ENCODE measurements at regions of chr6 and their contacts with region 1.

Region 1: DNA sequence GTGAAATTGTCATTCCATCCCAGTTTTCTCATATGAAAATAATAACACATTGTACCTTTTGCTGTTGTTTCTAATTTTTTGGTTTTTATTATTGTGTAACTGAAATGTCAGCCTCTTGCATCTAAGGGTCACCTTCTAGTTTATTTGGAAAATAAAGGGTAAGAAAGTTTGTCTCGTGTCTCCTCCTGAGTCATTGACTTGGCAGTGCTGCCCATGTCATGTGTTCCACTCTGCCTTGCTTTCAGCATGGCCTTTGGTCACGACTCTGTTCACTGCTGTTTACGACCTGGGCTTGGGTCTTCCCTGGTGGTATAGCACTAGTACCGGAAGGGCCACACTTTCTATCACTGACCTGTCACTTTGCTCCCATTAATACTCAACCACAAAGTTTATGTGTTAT is 171.4 kb upstream of the RSPO3 start:
- DNase-seq: no peak
- H3K4me3 Mint-ChIP-seq: no peak overlapping the region
- H3K27ac Mint-ChIP-seq: no peak overlapping the region
- H3K4me1 Mint-ChIP-seq: no peaks in the 10 kb centered on the region
- H3K27me3 Mint-ChIP-seq: no peaks in the 10 kb centered on the region
- CTCF ChIP-seq: no peak

Region 2: DNA sequence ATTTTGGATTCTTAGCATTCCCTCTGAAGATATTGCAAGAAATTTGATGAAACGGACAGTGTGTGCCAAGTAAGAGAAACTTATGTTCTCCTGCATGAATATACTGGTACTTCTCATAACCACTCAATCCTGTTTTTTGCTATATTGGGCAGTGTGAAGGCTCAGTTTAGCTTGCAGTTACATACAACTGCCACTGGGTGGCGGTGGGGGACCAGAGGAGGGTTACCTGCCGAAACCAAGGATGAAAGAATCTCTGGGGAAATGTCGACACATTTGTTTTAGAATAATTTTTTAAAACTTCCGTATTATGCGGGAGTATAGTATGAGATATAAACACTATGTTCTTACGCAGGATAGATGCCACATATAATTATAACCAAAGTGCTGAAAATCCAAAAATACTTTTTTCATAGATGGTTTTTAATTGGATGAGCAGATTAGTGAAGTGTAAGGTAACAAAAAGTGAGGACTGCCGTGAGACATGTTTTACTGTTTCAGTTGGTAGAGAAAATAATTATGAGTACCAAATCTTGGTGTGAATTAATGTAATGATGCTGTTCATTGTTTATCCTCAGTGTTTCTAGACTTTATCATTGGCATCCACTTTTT is 951.0 kb before region 1 on chr6:
- CTCF ChIA-PET with region 1: interaction called, 10 read pairs
- intact Hi-C with region 1: no loop called
- DNase-seq: peak; percentile 72
- H3K4me3 Mint-ChIP-seq: no peak overlapping the region
- H3K27ac Mint-ChIP-seq: no peak overlapping the region
- H3K4me1 Mint-ChIP-seq: peaks cover 12% of the 10 kb centered on the region
- H3K27me3 Mint-ChIP-seq: no peaks in the 10 kb centered on the region
- CTCF ChIP-seq: peak; percentile 77

Measured in Calu3 (cell line).